Activated CD8-positive, alpha-beta T cell treated with anti-CD3 and anti-CD28 coated beads, Interleukin-2, amount 10 ng/mL, durations not matched to agents 7 days and 5 days (primary cell): ENCODE measurements at regions of chr3 and their contacts with region 1.

Region 1: GRCh38 chr3:47164007-47164881 is at the start of gene SETD2:
- DNase-seq: peak; percentile 91
- ATAC-seq: peak; percentile 90
- H3K4me3 Mint-ChIP-seq: peak within 1 kb of the TSS; percentile 87
- H3K27ac Mint-ChIP-seq: peak within 1 kb of the TSS; percentile 97
- H3K4me1 Mint-ChIP-seq: peaks cover 43% of the 10 kb centered on the region
- H3K27me3 Mint-ChIP-seq: no peaks in the 10 kb centered on the region
- total RNA-seq, gene SETD2: 43.1 to 48.1 TPM

Region 2: GRCh38 chr3:47152578-47152977 is 11.7 kb before region 1 on chr3:
- CTCF ChIA-PET with region 1: interaction called, 12 read pairs
- POLR2A ChIA-PET with region 1: interaction called, 5 read pairs
- DNase-seq: no peak
- ATAC-seq: no peak
- H3K4me3 Mint-ChIP-seq: no peak overlapping the region
- H3K27ac Mint-ChIP-seq: no peak overlapping the region
- H3K4me1 Mint-ChIP-seq: peaks cover 30% of the 10 kb centered on the region
- H3K27me3 Mint-ChIP-seq: no peaks in the 10 kb centered on the region

Region 3: DNA sequence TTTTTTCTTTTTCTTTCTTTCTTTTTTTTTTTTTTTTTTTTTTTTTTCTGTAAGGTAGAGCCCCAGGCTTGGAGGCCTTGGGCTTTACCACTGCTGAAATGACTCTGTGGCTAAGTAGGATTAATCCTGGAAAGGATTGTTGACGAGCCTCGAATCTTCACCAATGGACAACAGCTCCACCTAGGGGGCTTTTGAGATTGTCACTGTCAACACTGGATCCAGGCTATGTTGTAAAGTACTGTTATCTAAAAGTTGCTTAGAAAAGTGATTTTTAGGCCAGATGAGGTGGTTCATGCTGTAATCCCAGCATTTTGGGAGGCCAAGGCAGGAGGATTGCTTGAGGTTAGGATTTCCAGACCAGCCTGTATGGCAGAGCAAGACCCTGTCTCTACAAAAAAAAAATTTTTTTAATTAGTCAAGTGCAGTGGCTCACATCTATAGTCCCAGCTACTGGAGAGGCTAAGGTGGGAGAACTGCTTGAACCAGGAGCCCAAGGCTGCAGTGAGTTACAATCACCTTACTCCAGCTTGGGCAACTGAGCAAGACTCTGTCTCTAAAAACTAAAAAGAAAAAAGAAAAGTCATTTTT is 160.1 kb after region 1 on chr3:
- CTCF ChIA-PET with region 1: interaction called, 20 read pairs
- POLR2A ChIA-PET with region 1: interaction called, 4 read pairs
- DNase-seq: peak; percentile 62
- ATAC-seq: peak; percentile 64
- H3K4me3 Mint-ChIP-seq: no peak overlapping the region
- H3K27ac Mint-ChIP-seq: no peak overlapping the region
- H3K4me1 Mint-ChIP-seq: peaks cover 8% of the 10 kb centered on the region
- H3K27me3 Mint-ChIP-seq: no peaks in the 10 kb centered on the region